ENCODE measurements at regions of chr5 and their contacts with region 1.

Region 1: GRCh38 chr5:40367255-40367654 is 312.5 kb upstream of the PTGER4 start:
- DNase-seq: peak in 4 of 9 experiments; percentile 26 to 72 (median 48)
- ATAC-seq: peak; percentile 66
- H3K4me3 ChIP-seq: no peak overlapping the region
- H3K4me3 Mint-ChIP-seq: no peak overlapping the region
- H3K27ac ChIP-seq: no peak overlapping the region
- H3K27ac Mint-ChIP-seq: peak overlapping the region; percentile 42
- H3K4me1 ChIP-seq: no peaks in the 10 kb centered on the region
- H3K4me1 Mint-ChIP-seq: peaks cover 6% of the 10 kb centered on the region
- H3K27me3 ChIP-seq: no peaks in the 10 kb centered on the region
- H3K27me3 Mint-ChIP-seq: no peaks in the 10 kb centered on the region
- CTCF ChIP-seq: peak; percentile 44

Region 2: DNA sequence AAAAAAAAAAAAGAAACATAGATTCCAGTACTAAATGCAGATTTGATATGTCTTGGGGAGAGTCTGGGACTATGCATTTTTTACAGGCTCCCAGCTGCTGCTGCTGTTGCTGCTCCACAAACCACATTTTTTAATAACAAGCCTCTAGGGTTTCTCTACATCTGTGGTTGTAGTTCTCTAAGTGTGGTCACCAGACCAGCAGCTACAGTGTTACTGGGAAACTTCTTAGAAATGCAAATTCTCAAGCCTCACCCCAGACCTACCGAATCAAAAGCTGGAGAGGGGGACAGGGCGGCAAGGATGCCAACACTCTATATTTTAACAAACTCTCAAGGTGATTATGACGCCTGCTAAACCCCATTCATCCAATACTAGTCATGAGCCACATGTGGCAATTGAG is 19.0 kb after region 1 on chr5:
- CTCF ChIA-PET with region 1: no interaction called
- POLR2A ChIA-PET with region 1: no interaction called
- intact Hi-C with region 1: loop called in 1 of 2 experiments (anchors 2 kb)
- DNase-seq: peak in 5 of 9 experiments; percentile 14 to 81 (median 38)
- ATAC-seq: peak; percentile 57
- H3K4me3 ChIP-seq: no peak overlapping the region
- H3K4me3 Mint-ChIP-seq: no peak overlapping the region
- H3K27ac ChIP-seq: peak overlapping the region in 1 of 2 experiments; percentile 42
- H3K27ac Mint-ChIP-seq: peak overlapping the region; percentile 45
- H3K4me1 ChIP-seq: peaks cover 50% of the 10 kb centered on the region
- H3K4me1 Mint-ChIP-seq: peaks cover 79% of the 10 kb centered on the region
- H3K27me3 ChIP-seq: no peaks in the 10 kb centered on the region
- H3K27me3 Mint-ChIP-seq: no peaks in the 10 kb centered on the region
- CTCF ChIP-seq: no peak

Region 3: DNA sequence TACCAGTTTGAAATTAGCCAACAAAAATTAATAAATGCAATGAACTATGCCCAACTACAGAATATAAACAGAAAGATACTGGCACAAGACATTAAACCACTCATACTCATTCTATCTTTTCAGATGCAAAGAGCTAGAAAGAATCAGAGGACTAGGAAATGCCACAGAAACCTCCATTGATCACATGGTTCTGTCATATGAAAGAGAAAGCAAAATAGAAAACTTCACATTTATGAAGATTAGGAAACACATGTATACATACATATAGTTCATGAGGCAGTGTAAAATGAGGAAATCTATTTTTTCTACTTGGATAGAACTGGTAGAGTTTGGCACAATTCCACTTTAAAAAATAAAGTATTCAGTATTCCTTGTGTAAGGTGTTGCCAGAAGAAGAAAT is 37.4 kb after region 1 on chr5:
- CTCF ChIA-PET with region 1: no interaction called
- POLR2A ChIA-PET with region 1: interaction called, 3 read pairs
- intact Hi-C with region 1: loop called (anchors 5 kb)
- DNase-seq: peak in 2 of 9 experiments; percentile 55 to 75
- ATAC-seq: peak; percentile 51
- H3K4me3 ChIP-seq: no peak overlapping the region
- H3K4me3 Mint-ChIP-seq: peak overlapping the region; percentile 23
- H3K27ac ChIP-seq: peak overlapping the region; percentile 7 to 97
- H3K27ac Mint-ChIP-seq: peak overlapping the region; percentile 84
- H3K4me1 ChIP-seq: peaks cover 55% of the 10 kb centered on the region
- H3K4me1 Mint-ChIP-seq: peaks cover 76% of the 10 kb centered on the region
- H3K27me3 ChIP-seq: no peaks in the 10 kb centered on the region
- H3K27me3 Mint-ChIP-seq: no peaks in the 10 kb centered on the region
- CTCF ChIP-seq: no peak

Region 4: DNA sequence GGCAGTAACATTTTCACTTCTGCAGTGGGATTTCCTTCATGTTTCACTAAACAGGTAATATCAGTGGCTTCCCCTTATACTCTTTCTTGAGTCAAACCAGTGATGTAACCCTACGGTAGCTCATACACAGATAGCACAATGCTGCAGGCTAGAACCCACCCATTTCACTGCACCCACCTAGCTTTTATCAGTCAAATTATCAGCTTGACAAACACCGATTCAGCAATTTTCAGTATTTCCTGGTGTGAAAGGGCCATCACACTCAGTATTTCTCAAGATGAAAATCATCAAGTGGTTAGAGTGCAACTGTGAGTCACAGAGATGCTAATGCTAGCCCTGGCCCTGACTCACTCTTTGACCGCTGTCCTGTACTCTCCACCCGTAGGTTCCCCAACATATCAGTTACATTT is 70.2 kb after region 1 on chr5:
- CTCF ChIA-PET with region 1: interaction called, 5 read pairs
- POLR2A ChIA-PET with region 1: no interaction called
- intact Hi-C with region 1: loop called (anchors 1 to 2 kb)
- DNase-seq: peak in 6 of 9 experiments; percentile 17 to 85 (median 32)
- ATAC-seq: peak; percentile 20
- H3K4me3 ChIP-seq: no peak overlapping the region
- H3K4me3 Mint-ChIP-seq: no peak overlapping the region
- H3K27ac ChIP-seq: peak overlapping the region; percentile 51 to 91
- H3K27ac Mint-ChIP-seq: peak overlapping the region; percentile 86
- H3K4me1 ChIP-seq: peaks cover 40% of the 10 kb centered on the region
- H3K4me1 Mint-ChIP-seq: peaks cover 67% of the 10 kb centered on the region
- H3K27me3 ChIP-seq: no peaks in the 10 kb centered on the region
- H3K27me3 Mint-ChIP-seq: no peaks in the 10 kb centered on the region
- CTCF ChIP-seq: no peak